ENCODE measurements at regions of chr6 and their contacts with region 1.

Region 1: GRCh38 chr6:99232056-99232455 is 117.4 kb downstream of the FAXC start:
- DNase-seq: no peak
- ATAC-seq: no peak
- H3K4me3 ChIP-seq: no peak overlapping the region
- H3K4me3 Mint-ChIP-seq: no peak overlapping the region
- H3K27ac ChIP-seq: no peak overlapping the region
- H3K27ac Mint-ChIP-seq: no peak overlapping the region
- H3K4me1 ChIP-seq: no peaks in the 10 kb centered on the region
- H3K4me1 Mint-ChIP-seq: no peaks in the 10 kb centered on the region
- H3K27me3 ChIP-seq: peaks cover 0 to 3% of the 10 kb centered on the region in 2 experiments
- H3K27me3 Mint-ChIP-seq: peaks cover 30% of the 10 kb centered on the region
- CTCF ChIP-seq: no peak

Region 2: DNA sequence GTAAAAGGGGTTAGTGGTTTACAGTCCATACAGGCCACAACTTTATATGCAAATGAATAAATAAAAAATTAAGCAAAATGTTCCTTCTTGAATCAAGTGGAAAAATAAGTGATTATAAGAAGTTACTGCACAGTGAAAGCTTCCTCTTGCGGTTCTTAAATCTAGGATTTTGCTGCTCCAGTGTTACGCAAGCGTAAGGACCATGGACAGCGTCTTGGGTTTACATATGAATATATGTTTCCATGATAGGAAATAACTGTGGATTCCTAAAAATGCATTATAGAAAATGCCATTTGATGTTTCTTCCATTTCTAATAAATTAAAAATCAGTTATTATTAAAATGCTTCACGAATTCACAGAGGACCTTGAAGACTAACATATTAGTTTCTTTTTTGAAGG is 574.3 kb before region 1 on chr6:
- CTCF ChIA-PET with region 1: no interaction called
- POLR2A ChIA-PET with region 1: no interaction called
- intact Hi-C with region 1: no loop called
- DNase-seq: no peak
- ATAC-seq: no peak
- H3K4me3 ChIP-seq: no peak overlapping the region
- H3K4me3 Mint-ChIP-seq: no peak overlapping the region
- H3K27ac ChIP-seq: no peak overlapping the region
- H3K27ac Mint-ChIP-seq: no peak overlapping the region
- H3K4me1 ChIP-seq: no peaks in the 10 kb centered on the region
- H3K4me1 Mint-ChIP-seq: no peaks in the 10 kb centered on the region
- H3K27me3 ChIP-seq: no peaks in the 10 kb centered on the region
- H3K27me3 Mint-ChIP-seq: no peaks in the 10 kb centered on the region
- CTCF ChIP-seq: no peak

Region 3: GRCh38 chr6:99185525-99185924 is 46.5 kb before region 1 on chr6:
- CTCF ChIA-PET with region 1: no interaction called
- POLR2A ChIA-PET with region 1: no interaction called
- intact Hi-C with region 1: loop called in 1 of 2 experiments (anchors 1 kb)
- DNase-seq: no peak
- ATAC-seq: no peak
- H3K4me3 ChIP-seq: no peak overlapping the region
- H3K4me3 Mint-ChIP-seq: no peak overlapping the region
- H3K27ac ChIP-seq: no peak overlapping the region
- H3K27ac Mint-ChIP-seq: no peak overlapping the region
- H3K4me1 ChIP-seq: no peaks in the 10 kb centered on the region
- H3K4me1 Mint-ChIP-seq: no peaks in the 10 kb centered on the region
- H3K27me3 ChIP-seq: no peaks in the 10 kb centered on the region
- H3K27me3 Mint-ChIP-seq: peaks cover 2% of the 10 kb centered on the region
- CTCF ChIP-seq: no peak

Region 4: GRCh38 chr6:99195986-99196655 is 35.9 kb before region 1 on chr6:
- CTCF ChIA-PET with region 1: no interaction called
- POLR2A ChIA-PET with region 1: no interaction called
- intact Hi-C with region 1: loop called in 1 of 2 experiments (anchors 1 kb)
- DNase-seq: no peak
- ATAC-seq: no peak
- H3K4me3 ChIP-seq: no peak overlapping the region
- H3K4me3 Mint-ChIP-seq: no peak overlapping the region
- H3K27ac ChIP-seq: no peak overlapping the region
- H3K27ac Mint-ChIP-seq: no peak overlapping the region
- H3K4me1 ChIP-seq: no peaks in the 10 kb centered on the region
- H3K4me1 Mint-ChIP-seq: no peaks in the 10 kb centered on the region
- H3K27me3 ChIP-seq: no peaks in the 10 kb centered on the region
- H3K27me3 Mint-ChIP-seq: peaks cover 6% of the 10 kb centered on the region
- CTCF ChIP-seq: no peak

Region 5: GRCh38 chr6:99250476-99250875 is 18.4 kb after region 1 on chr6:
- CTCF ChIA-PET with region 1: no interaction called
- POLR2A ChIA-PET with region 1: no interaction called
- intact Hi-C with region 1: no loop called
- DNase-seq: no peak
- ATAC-seq: no peak
- H3K4me3 ChIP-seq: no peak overlapping the region
- H3K4me3 Mint-ChIP-seq: no peak overlapping the region
- H3K27ac ChIP-seq: no peak overlapping the region
- H3K27ac Mint-ChIP-seq: no peak overlapping the region
- H3K4me1 ChIP-seq: no peaks in the 10 kb centered on the region
- H3K4me1 Mint-ChIP-seq: no peaks in the 10 kb centered on the region
- H3K27me3 ChIP-seq: no peaks in the 10 kb centered on the region
- H3K27me3 Mint-ChIP-seq: peaks cover 6% of the 10 kb centered on the region
- CTCF ChIP-seq: no peak

Measured in CD8-positive, alpha-beta T cell (primary cell).